H1 (cell line): ENCODE measurements at regions of chr4 and their contacts with region 1.

Region 1: DNA sequence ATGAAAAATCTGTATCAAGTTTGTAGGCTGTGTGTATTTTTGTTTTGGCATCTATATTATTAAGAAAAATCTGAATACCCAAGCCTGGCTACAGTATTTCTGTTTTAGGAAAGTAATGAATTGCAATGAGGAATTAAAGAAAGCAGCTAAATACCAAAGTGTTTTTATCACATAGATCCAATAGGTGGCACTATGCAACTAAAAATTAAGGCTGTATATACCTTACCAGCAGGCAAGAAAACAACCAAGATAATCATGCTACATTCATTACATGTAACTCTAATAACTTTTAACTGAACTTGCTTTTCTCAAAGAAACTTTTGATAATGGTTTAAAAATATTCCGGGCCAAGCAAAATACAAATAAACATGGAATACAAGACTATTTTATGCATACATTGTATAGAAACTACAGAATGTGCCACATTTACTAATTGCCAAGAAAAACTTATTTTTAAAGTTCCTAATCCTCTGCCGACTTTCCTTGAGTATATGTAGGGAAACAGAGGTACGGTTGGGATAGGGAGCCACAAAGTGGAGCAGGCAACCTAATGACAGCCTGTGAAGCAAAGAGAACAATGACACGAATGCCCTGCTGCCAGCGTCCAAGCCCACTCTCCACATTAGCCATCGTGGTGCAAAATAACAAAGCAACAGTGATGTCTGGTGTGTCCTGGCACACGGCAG is 63.7 kb downstream of the SEC24D start:
- DNase-seq: no peak
- H3K4me3 ChIP-seq: no peak overlapping the region
- H3K27ac ChIP-seq: no peak overlapping the region
- H3K4me1 ChIP-seq: peaks cover 0 to 7% (median 4%) of the 10 kb centered on the region in 4 experiments; a peak in 3 of 7 replicates
- H3K27me3 ChIP-seq: no peaks in the 10 kb centered on the region
- CTCF ChIP-seq: peak in 2 of 3 experiments; percentile 19 to 34; a peak in 2 of 4 replicates
- EP300 ChIP-seq: no peak
- POLR2A ChIP-seq: no peak
- RAD21 ChIP-seq: peak in 1 of 2 experiments; percentile 82

Region 2: DNA sequence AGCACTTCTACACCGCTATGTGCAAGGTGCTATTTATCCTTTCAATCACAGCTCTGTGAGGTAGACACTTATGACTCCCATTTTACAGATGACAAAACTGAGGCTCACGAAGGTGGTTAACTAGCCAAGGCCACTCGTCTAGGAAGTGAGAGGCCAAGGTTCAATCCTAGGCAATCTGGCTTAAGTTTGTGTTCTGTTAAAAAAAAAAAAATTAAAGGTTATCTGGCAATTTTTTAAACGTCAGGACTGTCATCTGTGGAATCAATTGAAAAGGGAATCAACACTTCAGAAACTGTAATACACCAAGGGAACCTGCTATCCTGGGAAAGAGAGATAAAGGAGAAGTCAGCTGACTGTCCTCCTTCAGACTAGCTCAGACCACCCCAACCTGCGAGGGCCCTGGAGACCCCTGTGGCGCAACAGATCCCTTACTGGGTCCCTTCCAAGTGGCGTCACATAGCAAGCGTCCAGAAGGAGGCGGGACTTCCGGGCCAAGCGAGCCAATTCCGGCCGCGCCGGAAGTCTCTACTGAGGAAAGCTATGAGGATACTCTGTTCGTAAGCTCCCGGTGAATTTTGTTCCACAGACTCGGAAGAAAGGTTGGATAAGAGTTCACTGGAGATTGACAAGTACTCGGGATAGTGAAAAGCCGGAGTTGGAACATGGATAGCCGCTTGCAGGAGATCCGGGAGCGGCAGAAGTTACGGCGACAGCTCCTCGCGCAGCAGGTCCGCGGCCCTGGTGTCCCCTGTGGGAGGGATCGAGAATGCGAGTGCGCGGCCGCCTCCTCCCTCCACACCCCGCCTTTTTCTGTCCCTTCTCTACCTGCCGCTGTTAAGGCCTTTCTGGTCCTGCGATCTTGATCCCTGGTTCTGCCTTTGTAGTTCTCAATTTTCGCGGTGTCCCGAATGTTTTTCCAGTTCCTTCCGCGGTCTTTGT is 87.1 kb before region 1 on chr4 and contains the start of gene METTL14:
- CTCF ChIA-PET with region 1: no interaction called
- POLR2A ChIA-PET with region 1: no interaction called
- DNase-seq: peak; percentile 86 to 97
- H3K4me3 ChIP-seq: peak within 1 kb of the TSS; percentile 83 to 94 (median 92)
- H3K27ac ChIP-seq: peak within 1 kb of the TSS; percentile 77
- H3K4me1 ChIP-seq: peaks cover 0 to 4% (median 0%) of the 10 kb centered on the region in 4 experiments; a peak in 2 of 7 replicates
- H3K27me3 ChIP-seq: no peaks in the 10 kb centered on the region
- CTCF ChIP-seq: peak in 1 of 3 experiments; percentile 2; a peak in 1 of 4 replicates
- EP300 ChIP-seq: no peak
- POLR2A ChIP-seq: peak; percentile 55 to 94
- RAD21 ChIP-seq: no peak
- total RNA-seq, gene METTL14: 52.8 and 57.3 TPM in 2 replicates

Region 3: GRCh38 chr4:118746292-118746919 is 25.8 kb before region 1 on chr4:
- CTCF ChIA-PET with region 1: interaction called, 14 read pairs
- POLR2A ChIA-PET with region 1: no interaction called
- DNase-seq: no peak
- H3K4me3 ChIP-seq: no peak overlapping the region
- H3K27ac ChIP-seq: no peak overlapping the region
- H3K4me1 ChIP-seq: no peaks in the 10 kb centered on the region
- H3K27me3 ChIP-seq: no peaks in the 10 kb centered on the region
- CTCF ChIP-seq: no peak
- EP300 ChIP-seq: no peak
- POLR2A ChIP-seq: no peak
- RAD21 ChIP-seq: no peak

Region 4: DNA sequence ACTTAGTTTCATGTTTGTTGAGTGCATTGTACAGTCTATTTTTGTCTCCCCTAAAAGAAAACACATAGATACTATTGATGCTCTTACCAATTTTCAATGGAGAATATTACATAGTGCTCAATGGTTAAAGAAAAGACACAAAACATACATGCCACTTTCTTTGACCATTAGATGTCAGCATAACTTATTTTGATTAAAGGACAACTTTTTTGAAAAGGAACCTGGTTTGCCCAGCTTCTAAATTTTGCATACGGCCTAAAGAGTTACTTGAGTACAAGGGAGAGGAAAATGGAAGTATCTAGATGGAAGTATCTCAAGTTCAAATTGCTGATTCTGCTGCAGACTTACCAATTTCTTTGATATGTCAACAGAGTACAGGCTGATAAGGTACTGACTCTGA is 18.5 kb before region 1 on chr4:
- CTCF ChIA-PET with region 1: interaction called, 16 read pairs
- POLR2A ChIA-PET with region 1: no interaction called
- DNase-seq: no peak
- H3K4me3 ChIP-seq: no peak overlapping the region
- H3K27ac ChIP-seq: no peak overlapping the region
- H3K4me1 ChIP-seq: peaks cover 0 to 4% (median 0%) of the 10 kb centered on the region in 4 experiments; a peak in 2 of 7 replicates
- H3K27me3 ChIP-seq: no peaks in the 10 kb centered on the region
- CTCF ChIP-seq: no peak
- EP300 ChIP-seq: no peak
- POLR2A ChIP-seq: no peak
- RAD21 ChIP-seq: no peak